ENCODE measurements at regions of chr20 and their contacts with region 1.

Region 1: GRCh38 chr20:56400090-56400542 is 7.7 kb downstream of the CSTF1 start:
- DNase-seq: no peak
- H3K4me3 ChIP-seq: no peak overlapping the region
- H3K27ac ChIP-seq: peak overlapping the region in 2 of 8 donors; percentile 8 to 30
- H3K4me1 ChIP-seq: peaks cover 11 to 28% (median 13%) of the 10 kb centered on the region in 6 donors
- H3K27me3 ChIP-seq: no peaks in the 10 kb centered on the region
- CTCF ChIP-seq: peak; percentile 52 to 91 (median 79)
- POLR2A ChIP-seq: no peak

Region 2: DNA sequence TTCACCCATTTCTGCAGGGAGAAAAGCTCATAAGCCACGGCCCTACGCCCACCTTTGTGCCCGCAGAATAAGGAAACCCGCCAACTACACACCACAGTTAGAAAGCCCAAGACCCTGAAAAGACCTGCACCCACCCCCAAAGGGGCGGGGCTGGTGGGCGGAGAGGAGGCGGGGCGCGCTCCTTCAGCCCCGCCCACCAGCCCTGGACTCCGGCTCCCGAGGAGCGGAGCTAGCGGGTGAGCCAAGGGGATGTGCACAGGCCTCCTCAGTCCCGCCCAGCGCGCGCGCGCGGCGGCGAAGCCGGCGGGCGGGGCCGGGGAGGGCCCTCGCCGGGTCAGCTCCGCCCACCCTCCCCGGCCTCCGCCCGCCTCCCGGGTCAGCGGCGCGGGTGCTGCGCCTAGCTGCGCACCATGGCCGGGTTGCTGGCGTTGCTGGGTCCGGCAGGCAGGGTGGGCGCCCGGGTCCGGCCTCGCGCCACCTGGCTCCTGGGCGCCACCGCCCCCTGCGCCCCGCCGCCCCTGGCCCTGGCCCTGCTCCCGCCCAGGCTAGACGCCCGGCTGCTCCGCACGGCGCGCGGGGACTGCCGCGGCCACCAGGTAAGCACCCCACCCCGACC is 41.4 kb before region 1 on chr20 and contains the start of gene FAM210B:
- intact Hi-C with region 1: loop called (anchors 5 kb)
- DNase-seq: peak; percentile 96
- H3K4me3 ChIP-seq: peak within 1 kb of the TSS; percentile 60 to 98 (median 82)
- H3K27ac ChIP-seq: peak within 1 kb of the TSS; percentile 17 to 85 (median 74)
- H3K4me1 ChIP-seq: peaks cover 0 to 42% (median 25%) of the 10 kb centered on the region in 6 donors
- H3K27me3 ChIP-seq: no peaks in the 10 kb centered on the region
- CTCF ChIP-seq: no peak
- POLR2A ChIP-seq: no peak
- total RNA-seq, gene FAM210B: 18.0 to 48.4 (median 30.3) TPM

Region 3: DNA sequence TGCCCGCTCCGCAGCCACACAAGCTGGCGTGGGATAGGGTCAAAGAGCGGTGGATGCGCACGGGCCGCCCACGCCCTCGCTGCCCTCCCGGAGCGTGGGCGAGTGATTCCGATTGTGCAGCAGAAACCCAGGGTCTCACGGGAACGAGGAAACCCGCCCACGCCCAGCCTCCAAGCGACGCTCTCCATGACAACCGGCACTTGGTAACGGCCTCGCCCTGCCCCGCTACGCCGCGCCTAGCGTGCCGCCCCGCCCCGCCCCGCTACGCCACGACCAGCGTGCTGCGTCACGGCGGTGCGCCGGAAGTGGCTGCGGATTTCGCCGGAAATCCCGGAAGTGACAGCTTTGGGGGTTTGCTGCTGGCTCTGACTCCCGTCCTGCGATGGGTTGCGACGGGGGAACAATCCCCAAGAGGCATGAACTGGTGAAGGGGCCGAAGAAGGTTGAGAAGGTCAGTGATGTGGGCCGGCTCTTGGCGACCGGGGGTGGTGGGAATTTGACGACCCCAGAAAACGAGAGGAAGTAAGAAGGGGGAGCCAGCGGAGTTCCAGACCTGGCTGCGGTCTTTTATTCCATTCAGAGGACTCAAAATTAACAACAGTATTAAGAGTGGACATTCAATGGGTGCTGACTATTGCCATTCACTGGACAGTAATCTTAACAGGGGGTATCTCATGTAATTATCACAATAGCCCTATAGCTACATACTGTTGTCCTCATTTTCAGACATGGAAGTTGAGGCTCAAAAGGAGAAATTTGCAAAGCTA is 68.4 kb after region 1 on chr20 and contains the start of gene RTF2:
- intact Hi-C with region 1: loop called (anchors 5 kb)
- DNase-seq: peak; percentile 98
- H3K4me3 ChIP-seq: peak within 1 kb of the TSS; percentile 57 to 95 (median 67)
- H3K27ac ChIP-seq: peak within 1 kb of the TSS; percentile 83 to 95 (median 91)
- H3K4me1 ChIP-seq: peaks cover 12 to 82% (median 53%) of the 10 kb centered on the region in 6 donors
- H3K27me3 ChIP-seq: no peaks in the 10 kb centered on the region
- CTCF ChIP-seq: peak in 5 of 11 experiments; percentile 7 to 42 (median 26)
- POLR2A ChIP-seq: peak in 1 of 3 donors; percentile 90
- total RNA-seq, gene RTF2: 50.3 to 89.3 (median 72.7) TPM